Activated CD8-positive, alpha-beta T cell treated with anti-CD3 and anti-CD28 coated beads for 36 hours (primary cell): ENCODE measurements at regions of chr16 and their contacts with region 1.

Region 1: DNA sequence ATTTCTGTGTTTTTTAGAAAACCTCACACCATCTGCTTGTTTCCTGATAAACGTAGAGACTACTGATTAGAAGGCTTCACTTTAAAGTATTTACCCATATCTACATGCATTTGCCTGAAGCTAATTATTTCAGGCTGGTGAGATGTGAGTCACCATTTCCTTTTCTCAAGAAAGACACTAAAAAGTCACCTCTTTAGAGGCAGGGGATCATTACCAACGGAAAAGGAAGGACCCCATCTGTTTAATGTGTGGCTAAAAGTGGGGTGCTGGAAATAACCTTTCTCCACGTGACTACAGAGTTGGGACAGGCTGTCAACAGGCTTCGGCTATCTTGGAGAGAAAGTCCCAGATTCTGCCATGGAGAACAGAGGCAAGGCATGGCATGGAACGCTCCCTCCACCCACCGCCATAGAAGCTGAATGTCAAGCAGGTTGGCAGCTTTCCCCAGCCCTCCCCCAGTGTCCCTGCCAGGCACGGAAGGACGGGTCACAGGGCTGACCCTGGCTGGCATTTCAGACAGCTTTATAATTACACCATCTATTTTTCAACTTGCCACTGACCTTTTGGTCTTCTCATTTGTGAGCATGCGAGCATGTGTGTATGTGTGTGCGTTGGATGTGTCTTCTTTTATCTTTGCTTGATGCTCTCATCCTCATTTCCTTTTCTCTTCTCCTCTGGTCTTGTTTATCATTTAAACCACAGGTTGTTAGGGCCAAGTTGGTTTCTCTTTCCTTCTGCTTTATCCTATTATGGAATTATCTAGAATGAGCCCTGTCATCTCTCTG is 157.0 kb downstream of the CPPED1 start:
- DNase-seq: peak; percentile 72
- ATAC-seq: peak; percentile 84
- H3K4me3 Mint-ChIP-seq: peak overlapping the region; percentile 27
- H3K27ac Mint-ChIP-seq: peak overlapping the region; percentile 96
- H3K4me1 Mint-ChIP-seq: peaks cover 21% of the 10 kb centered on the region
- H3K27me3 Mint-ChIP-seq: no peaks in the 10 kb centered on the region
- CTCF ChIP-seq: no peak

Region 2: DNA sequence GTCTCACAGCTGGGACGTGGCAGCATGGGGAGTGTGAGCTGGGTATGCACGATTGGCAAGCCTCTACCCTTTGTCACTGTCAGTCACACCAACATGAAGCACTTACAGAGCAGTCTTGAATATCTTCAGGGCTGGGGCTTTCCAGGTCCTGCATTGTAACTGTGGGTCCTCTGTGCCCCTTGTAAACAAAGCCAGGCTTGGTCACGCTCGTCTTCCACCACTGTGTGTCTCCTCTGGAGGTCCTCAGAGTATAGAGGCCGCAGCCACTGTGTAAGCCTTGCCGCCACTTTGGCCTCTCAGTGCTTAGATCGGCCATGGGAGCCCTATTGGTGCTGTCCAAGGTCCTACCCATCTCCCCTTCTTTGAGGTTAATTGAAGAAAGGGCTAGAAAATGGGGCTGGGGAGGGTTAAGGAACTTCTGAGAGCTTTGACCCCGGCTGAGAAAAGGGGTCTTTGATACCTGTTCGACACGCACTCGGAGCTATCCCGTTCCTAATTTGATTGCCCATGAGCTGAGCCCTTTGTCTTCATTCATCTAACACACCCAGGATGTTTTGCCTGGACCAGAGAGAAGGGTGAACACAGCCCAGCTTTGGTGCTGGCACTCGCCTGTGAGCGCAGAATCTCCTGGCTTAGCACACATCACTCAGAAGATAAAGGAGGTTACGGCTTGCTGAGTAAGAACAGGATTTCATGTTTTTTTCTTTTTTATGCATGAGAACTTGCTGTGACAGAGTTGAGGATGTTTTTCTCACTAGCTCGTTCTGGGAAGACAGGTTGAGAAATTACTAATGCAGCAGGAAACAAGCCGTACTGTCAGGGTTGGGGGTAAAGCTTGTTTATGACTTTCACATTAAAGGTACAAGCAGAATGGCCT is 110.9 kb before region 1 on chr16:
- CTCF ChIA-PET with region 1: no interaction called
- POLR2A ChIA-PET with region 1: no interaction called
- intact Hi-C with region 1: loop called (anchors 5 kb)
- DNase-seq: peak; percentile 59
- ATAC-seq: peak; percentile 69
- H3K4me3 Mint-ChIP-seq: peak overlapping the region; percentile 11
- H3K27ac Mint-ChIP-seq: peak overlapping the region; percentile 89
- H3K4me1 Mint-ChIP-seq: peaks cover 79% of the 10 kb centered on the region
- H3K27me3 Mint-ChIP-seq: no peaks in the 10 kb centered on the region
- CTCF ChIP-seq: no peak